CD4-positive, alpha-beta T cell (primary cell): ENCODE measurements at regions of chr10 and their contacts with region 1.

Region 1: GRCh38 chr10:30783939-30784500 is 154.5 kb upstream of the LYZL2 start:
- DNase-seq: peak; percentile 73 to 91 (median 82)
- ATAC-seq: peak; percentile 91
- H3K4me3 ChIP-seq: peak overlapping the region; percentile 48
- H3K4me3 Mint-ChIP-seq: peak overlapping the region; percentile 82
- H3K27ac ChIP-seq: peak overlapping the region; percentile 7 to 40
- H3K27ac Mint-ChIP-seq: peak overlapping the region; percentile 62
- H3K4me1 ChIP-seq: peaks cover 18% of the 10 kb centered on the region
- H3K4me1 Mint-ChIP-seq: peaks cover 26% of the 10 kb centered on the region
- H3K27me3 ChIP-seq: no peaks in the 10 kb centered on the region
- H3K27me3 Mint-ChIP-seq: no peaks in the 10 kb centered on the region
- CTCF ChIP-seq: peak; percentile 75

Region 2: DNA sequence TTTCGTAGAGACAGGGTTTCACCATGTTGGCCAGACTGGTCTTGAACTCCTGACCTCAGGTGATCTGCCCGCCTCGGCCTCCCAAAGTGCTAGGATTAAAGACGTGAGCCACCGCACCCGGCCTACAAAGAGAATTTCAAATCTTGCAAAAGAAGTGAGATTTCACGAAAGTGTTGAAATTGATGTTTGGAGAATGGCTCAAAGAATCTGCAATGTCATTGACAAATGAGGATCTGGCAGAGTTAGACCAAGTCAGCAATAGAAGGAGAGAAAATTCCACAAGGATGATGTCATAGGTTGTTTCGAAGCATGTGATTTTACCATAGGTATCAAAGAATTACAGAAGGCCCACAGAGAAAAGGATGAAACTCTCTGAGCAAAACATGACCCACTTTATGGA is 226.1 kb before region 1 on chr10:
- CTCF ChIA-PET with region 1: no interaction called
- POLR2A ChIA-PET with region 1: no interaction called
- intact Hi-C with region 1: no loop called
- DNase-seq: peak in 2 of 14 experiments; percentile 49 to 56
- ATAC-seq: no peak
- H3K4me3 ChIP-seq: no peak overlapping the region
- H3K4me3 Mint-ChIP-seq: no peak overlapping the region
- H3K27ac ChIP-seq: no peak overlapping the region
- H3K27ac Mint-ChIP-seq: no peak overlapping the region
- H3K4me1 ChIP-seq: no peaks in the 10 kb centered on the region
- H3K4me1 Mint-ChIP-seq: peaks cover 4% of the 10 kb centered on the region
- H3K27me3 ChIP-seq: peaks cover 0 to 1% of the 10 kb centered on the region in 2 experiments
- H3K27me3 Mint-ChIP-seq: peaks cover 2% of the 10 kb centered on the region
- CTCF ChIP-seq: no peak

Region 3: DNA sequence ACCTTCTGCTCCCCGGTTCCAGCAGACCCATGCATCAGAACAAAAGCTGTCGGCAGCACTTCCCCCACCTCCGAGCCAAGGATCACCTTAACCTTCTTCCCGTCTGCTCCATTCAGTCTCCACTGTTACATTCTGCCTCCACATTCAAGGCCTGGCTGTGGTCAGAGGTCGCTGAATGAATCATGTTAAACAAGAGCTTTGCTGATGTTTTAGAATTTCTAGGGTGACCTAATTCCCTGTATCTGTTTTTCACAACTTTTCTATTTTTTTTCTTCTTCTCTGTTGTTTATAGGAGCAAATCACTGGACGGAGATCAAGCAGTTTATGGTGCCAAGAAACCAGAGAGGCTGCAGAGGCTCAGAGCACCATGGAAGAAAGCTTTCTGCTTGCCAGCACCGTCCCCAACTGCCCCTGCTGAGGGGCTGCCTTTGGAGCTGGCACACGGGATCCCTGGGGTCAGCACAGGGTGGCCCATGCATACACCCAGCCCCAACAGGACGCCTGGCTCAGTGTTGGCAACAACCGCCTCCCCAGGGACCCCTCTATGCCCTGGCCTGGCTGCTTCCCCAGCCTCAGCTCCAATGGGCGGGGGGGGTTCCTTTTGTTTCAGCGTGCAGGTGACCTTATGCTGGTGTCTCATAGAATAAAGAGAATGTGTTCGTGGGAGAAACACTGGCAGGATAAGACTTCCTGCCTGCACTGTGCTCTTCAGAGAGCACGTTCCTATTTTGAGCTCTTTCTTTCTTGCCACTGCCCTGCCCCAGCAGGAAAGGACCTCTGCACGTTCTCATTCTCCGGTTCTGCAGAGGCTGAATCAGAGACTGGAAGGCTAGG is 28.2 kb after region 1 on chr10:
- CTCF ChIA-PET with region 1: no interaction called
- POLR2A ChIA-PET with region 1: interaction called, 23 read pairs
- intact Hi-C with region 1: no loop called
- DNase-seq: peak in 1 of 14 experiments; percentile 13
- ATAC-seq: peak; percentile 21
- H3K4me3 ChIP-seq: no peak overlapping the region
- H3K4me3 Mint-ChIP-seq: peak overlapping the region; percentile 5
- H3K27ac ChIP-seq: no peak overlapping the region
- H3K27ac Mint-ChIP-seq: peak overlapping the region; percentile 63
- H3K4me1 ChIP-seq: peaks cover 10% of the 10 kb centered on the region
- H3K4me1 Mint-ChIP-seq: peaks cover 26% of the 10 kb centered on the region
- H3K27me3 ChIP-seq: no peaks in the 10 kb centered on the region
- H3K27me3 Mint-ChIP-seq: no peaks in the 10 kb centered on the region
- CTCF ChIP-seq: no peak

Region 4: GRCh38 chr10:30846710-30847109 is 62.7 kb after region 1 on chr10:
- CTCF ChIA-PET with region 1: no interaction called
- POLR2A ChIA-PET with region 1: interaction called, 10 read pairs
- intact Hi-C with region 1: loop called (anchors 1 to 5 kb)
- DNase-seq: no peak
- ATAC-seq: no peak
- H3K4me3 ChIP-seq: no peak overlapping the region
- H3K4me3 Mint-ChIP-seq: no peak overlapping the region
- H3K27ac ChIP-seq: no peak overlapping the region
- H3K27ac Mint-ChIP-seq: no peak overlapping the region
- H3K4me1 ChIP-seq: no peaks in the 10 kb centered on the region
- H3K4me1 Mint-ChIP-seq: peaks cover 10% of the 10 kb centered on the region
- H3K27me3 ChIP-seq: no peaks in the 10 kb centered on the region
- H3K27me3 Mint-ChIP-seq: no peaks in the 10 kb centered on the region
- CTCF ChIP-seq: no peak

Region 5: DNA sequence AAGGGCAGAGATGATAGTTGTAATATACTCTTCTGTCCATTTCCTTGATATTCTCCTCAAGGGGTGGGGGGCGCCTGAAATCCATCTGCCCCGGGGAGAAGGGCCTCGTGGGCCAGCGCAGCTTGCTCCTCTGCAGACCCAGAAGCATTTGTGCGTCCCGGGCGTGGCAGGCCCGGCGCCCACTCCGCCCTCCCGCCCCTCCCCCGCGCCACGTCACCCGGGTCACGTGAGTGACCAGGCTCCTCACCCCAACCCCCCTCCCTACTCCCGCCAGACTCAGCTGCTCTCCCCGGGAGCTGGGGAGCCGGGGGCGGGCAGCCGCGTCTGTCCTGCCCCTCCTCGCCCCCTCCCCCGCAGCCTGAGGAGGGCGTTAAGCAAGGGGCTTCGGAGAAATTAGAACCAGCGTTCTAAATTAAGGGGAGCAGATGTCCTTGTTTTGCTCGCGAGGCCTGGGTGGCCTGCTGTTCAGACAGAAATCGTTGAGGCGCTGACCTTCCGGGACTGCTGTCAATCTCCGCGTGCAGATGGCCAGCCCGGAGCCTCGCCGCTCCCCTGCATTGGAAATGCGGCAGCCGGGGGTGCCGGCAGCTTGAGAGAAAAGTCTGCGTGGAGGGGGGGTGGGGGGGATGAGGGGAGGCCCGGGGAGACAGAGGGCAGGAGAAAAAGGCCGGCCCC is 349.7 kb after region 1 on chr10:
- CTCF ChIA-PET with region 1: no interaction called
- POLR2A ChIA-PET with region 1: interaction called, 7 read pairs
- intact Hi-C with region 1: loop called in 1 of 2 experiments (anchors 5 kb)
- DNase-seq: peak; percentile 45 to 85 (median 66)
- ATAC-seq: peak; percentile 63
- H3K4me3 ChIP-seq: peak overlapping the region; percentile 83
- H3K4me3 Mint-ChIP-seq: peak overlapping the region; percentile 84
- H3K27ac ChIP-seq: peak overlapping the region in 1 of 2 donors; percentile 45
- H3K27ac Mint-ChIP-seq: peak overlapping the region; percentile 86
- H3K4me1 ChIP-seq: peaks cover 41% of the 10 kb centered on the region
- H3K4me1 Mint-ChIP-seq: peaks cover 50% of the 10 kb centered on the region
- H3K27me3 ChIP-seq: no peaks in the 10 kb centered on the region
- H3K27me3 Mint-ChIP-seq: no peaks in the 10 kb centered on the region
- CTCF ChIP-seq: no peak

Region 6: GRCh38 chr10:31490858-31491504 is 707.0 kb after region 1 on chr10:
- CTCF ChIA-PET with region 1: interaction called, 3 read pairs
- POLR2A ChIA-PET with region 1: interaction called, 12 read pairs
- intact Hi-C with region 1: loop called (anchors 1 to 5 kb)
- DNase-seq: peak in 4 of 14 experiments; percentile 16 to 59 (median 52)
- ATAC-seq: peak; percentile 49
- H3K4me3 ChIP-seq: no peak overlapping the region
- H3K4me3 Mint-ChIP-seq: no peak overlapping the region
- H3K27ac ChIP-seq: no peak overlapping the region
- H3K27ac Mint-ChIP-seq: no peak overlapping the region
- H3K4me1 ChIP-seq: no peaks in the 10 kb centered on the region
- H3K4me1 Mint-ChIP-seq: peaks cover 12% of the 10 kb centered on the region
- H3K27me3 ChIP-seq: no peaks in the 10 kb centered on the region
- H3K27me3 Mint-ChIP-seq: no peaks in the 10 kb centered on the region
- CTCF ChIP-seq: peak; percentile 52

Region 7: GRCh38 chr10:31770307-31770902 is 986.4 kb after region 1 on chr10:
- CTCF ChIA-PET with region 1: interaction called, 6 read pairs
- POLR2A ChIA-PET with region 1: interaction called, 4 read pairs
- intact Hi-C with region 1: loop called (anchors 1 kb)
- DNase-seq: peak; percentile 43 to 76 (median 54)
- ATAC-seq: peak; percentile 97
- H3K4me3 ChIP-seq: no peak overlapping the region
- H3K4me3 Mint-ChIP-seq: no peak overlapping the region
- H3K27ac ChIP-seq: no peak overlapping the region
- H3K27ac Mint-ChIP-seq: no peak overlapping the region
- H3K4me1 ChIP-seq: no peaks in the 10 kb centered on the region
- H3K4me1 Mint-ChIP-seq: no peaks in the 10 kb centered on the region
- H3K27me3 ChIP-seq: no peaks in the 10 kb centered on the region
- H3K27me3 Mint-ChIP-seq: no peaks in the 10 kb centered on the region
- CTCF ChIP-seq: peak; percentile 89